ENCODE measurements at regions of chr4 and their contacts with region 1.

Region 1: DNA sequence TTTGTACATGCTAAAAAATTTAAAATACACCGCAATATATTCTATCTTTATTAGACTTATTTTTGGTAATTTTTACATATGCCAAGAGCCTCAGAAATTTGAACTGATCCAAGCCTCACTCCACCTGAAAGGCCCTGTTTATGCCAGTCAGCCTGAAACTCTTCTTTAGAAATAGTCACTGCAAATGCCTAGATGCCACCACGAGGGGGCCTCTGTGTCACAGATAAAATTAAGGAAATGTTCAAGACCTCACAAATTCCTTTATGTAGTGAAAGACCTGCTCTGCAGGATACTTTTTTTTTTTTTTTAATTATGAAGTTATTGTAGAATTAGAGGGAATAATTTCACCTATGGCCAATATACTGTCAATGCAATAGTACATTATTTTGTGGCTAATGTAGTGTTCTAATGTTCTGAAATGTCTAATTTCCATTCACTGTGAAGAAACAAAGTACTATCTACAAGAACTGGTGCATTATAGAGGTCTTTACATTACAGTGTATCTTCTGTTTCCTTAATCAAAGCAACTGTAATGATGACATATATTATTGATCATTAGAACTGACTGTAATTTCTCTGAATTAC is 69.8 kb downstream of the DTHD1 start:
- H3K4me3 Mint-ChIP-seq: no peak overlapping the region
- H3K27ac Mint-ChIP-seq: peak overlapping the region; percentile 57
- H3K4me1 Mint-ChIP-seq: peaks cover 27% of the 10 kb centered on the region
- H3K27me3 Mint-ChIP-seq: no peaks in the 10 kb centered on the region

Region 2: GRCh38 chr4:36249610-36250009 is 101.6 kb before region 1 on chr4:
- intact Hi-C with region 1: loop called (anchors 5 kb)
- H3K4me3 Mint-ChIP-seq: no peak overlapping the region
- H3K27ac Mint-ChIP-seq: no peak overlapping the region
- H3K4me1 Mint-ChIP-seq: peaks cover 17% of the 10 kb centered on the region
- H3K27me3 Mint-ChIP-seq: peaks cover 4% of the 10 kb centered on the region

Region 3: GRCh38 chr4:36325499-36325898 is 25.7 kb before region 1 on chr4:
- intact Hi-C with region 1: loop called (anchors 2 kb)
- H3K4me3 Mint-ChIP-seq: peak overlapping the region; percentile 24
- H3K27ac Mint-ChIP-seq: peak overlapping the region; percentile 97
- H3K4me1 Mint-ChIP-seq: peaks cover 71% of the 10 kb centered on the region
- H3K27me3 Mint-ChIP-seq: no peaks in the 10 kb centered on the region

Region 4: DNA sequence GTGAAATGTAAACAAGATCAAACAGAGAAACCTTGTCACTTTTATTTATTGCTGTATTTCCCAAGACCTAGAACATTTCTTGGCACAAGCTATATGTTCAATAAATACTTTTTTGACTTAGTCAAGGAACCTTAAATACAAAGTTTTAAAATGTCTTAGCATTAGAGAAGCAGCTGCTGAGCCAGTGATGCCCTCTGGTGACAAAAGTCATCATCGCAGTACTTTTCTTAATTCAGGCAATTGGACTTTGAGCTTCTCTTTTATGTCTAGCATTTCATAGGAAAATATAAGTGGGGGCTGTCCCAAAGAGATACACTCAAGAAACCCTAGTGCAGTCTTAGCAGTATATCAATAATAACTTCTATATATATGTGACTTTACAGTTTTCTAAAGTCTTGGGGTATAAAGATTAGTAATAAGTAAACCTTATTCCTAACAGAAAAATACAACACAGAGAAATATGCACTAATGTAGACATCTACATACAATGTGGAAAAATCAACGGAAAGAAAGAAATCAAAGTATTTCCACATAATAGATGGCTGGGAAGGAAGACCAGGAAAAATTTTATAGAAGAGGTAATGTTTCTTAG is 48.7 kb after region 1 on chr4:
- intact Hi-C with region 1: loop called (anchors 1 kb)
- H3K4me3 Mint-ChIP-seq: no peak overlapping the region
- H3K27ac Mint-ChIP-seq: no peak overlapping the region
- H3K4me1 Mint-ChIP-seq: peaks cover 5% of the 10 kb centered on the region
- H3K27me3 Mint-ChIP-seq: no peaks in the 10 kb centered on the region

Region 5: DNA sequence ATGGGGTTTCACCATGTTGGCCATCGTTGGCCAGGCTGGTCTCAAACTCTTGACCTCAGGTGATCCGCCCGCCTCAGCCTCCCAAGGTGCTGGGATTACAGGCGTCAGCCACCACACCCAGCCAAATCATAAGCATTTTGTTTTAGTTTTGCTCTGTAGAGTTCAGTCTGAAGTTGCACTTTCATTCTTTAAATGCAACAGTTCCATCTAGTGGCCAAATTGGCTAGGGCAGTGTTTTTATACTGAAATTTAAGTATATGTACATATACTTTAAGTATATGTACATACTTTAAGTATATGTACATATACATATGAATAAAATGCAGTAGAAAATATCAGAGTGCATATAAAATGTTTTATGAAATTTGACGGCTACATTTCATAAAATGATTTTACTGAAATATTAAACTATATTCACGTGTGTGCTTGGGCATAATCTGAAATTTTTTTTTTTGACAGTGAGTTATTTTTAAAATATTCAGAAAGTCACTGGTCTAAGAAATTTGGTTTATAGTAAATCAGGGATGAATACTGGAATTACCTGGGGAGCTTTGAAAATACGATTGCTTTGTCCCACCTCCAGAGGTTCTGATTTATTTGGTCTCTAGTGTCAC is 1038.9 kb after region 1 on chr4:
- intact Hi-C with region 1: loop called (anchors 5 kb)
- H3K4me3 Mint-ChIP-seq: peak overlapping the region; percentile 23
- H3K27ac Mint-ChIP-seq: no peak overlapping the region
- H3K4me1 Mint-ChIP-seq: peaks cover 39% of the 10 kb centered on the region
- H3K27me3 Mint-ChIP-seq: no peaks in the 10 kb centered on the region

Measured in dendritic cell treated with granulocyte-macrophage colony-stimulating factor and Interleukin-4, amounts not matched to agents 40 ng/mL and 50 ng/mL, for 4 days (primary cell).